IMR-90 (cell line): ENCODE measurements at regions of chrX and their contacts with region 1.

Region 1: GRCh38 chrX:108224727-108225621 is 133.4 kb downstream of the ATG4A start:
- DNase-seq: peak; percentile 31
- ATAC-seq: peak; percentile 63
- H3K4me3 ChIP-seq: no peak overlapping the region
- H3K27ac ChIP-seq: peak overlapping the region; percentile 20; the same call in 1 of the 2 replicates
- H3K4me1 ChIP-seq: peaks cover 2% of the 10 kb centered on the region; the same call in 1 of the 2 replicates
- H3K27me3 ChIP-seq: peaks cover 14% of the 10 kb centered on the region
- CTCF ChIP-seq: peak; percentile 59
- POLR2A ChIP-seq: no peak
- RAD21 ChIP-seq: peak; percentile 69

Region 2: DNA sequence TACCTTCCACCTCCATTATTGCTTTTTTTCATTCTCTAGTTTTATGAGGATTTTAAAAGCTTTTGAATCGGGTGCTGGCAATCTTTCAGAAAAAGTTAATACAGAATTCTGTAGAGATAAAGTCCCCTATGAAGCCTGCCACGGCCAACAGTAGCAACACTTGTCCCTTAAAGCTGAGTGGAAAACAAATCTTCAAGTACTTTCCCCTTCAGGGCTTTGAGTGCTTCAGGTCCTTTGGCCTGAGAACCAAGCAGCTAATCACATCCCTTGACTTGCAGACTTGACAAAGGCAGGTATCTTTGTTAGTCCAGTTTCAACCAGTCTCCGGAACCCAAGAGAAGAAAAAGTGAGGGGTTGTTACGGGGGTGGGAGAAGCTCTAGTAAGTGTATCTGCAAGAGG is 11.0 kb after region 1 on chrX:
- CTCF ChIA-PET with region 1: no interaction called
- POLR2A ChIA-PET with region 1: no interaction called
- dilution Hi-C with region 1: no loop called
- in situ Hi-C with region 1: no loop called
- intact Hi-C with region 1: no loop called
- DNase-seq: no peak
- ATAC-seq: no peak
- H3K4me3 ChIP-seq: no peak overlapping the region
- H3K27ac ChIP-seq: no peak overlapping the region
- H3K4me1 ChIP-seq: no peaks in the 10 kb centered on the region
- H3K27me3 ChIP-seq: peaks cover 12% of the 10 kb centered on the region
- CTCF ChIP-seq: no peak
- POLR2A ChIP-seq: no peak
- RAD21 ChIP-seq: no peak

Region 3: DNA sequence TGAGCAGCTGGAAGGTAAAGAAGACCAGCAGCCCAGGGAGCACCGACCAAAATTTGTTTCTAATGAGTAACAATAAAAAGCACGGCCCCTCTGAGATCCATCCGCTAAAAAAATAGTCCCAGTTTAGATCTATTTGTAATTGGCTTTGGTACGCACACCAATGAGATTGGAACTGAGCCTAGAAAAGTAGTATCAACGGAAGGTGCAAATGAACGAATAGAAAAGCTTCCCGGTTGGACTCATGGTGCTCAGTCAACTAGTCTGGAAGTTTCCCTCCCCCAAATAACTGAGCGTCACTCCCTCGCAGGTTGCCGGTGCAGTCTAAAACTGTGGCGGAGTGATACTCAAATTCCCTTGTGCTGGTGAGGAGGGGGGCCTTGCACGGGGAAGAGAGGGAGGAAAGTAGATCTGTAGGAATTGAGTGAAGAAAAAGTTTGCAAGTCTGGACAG is 214.5 kb after region 1 on chrX and contains the start of gene COL4A5:
- CTCF ChIA-PET with region 1: no interaction called
- POLR2A ChIA-PET with region 1: no interaction called
- dilution Hi-C with region 1: no loop called
- in situ Hi-C with region 1: no loop called
- intact Hi-C with region 1: loop called (anchors 2 kb)
- DNase-seq: peak; percentile 80
- ATAC-seq: peak; percentile 73
- H3K4me3 ChIP-seq: peak within 1 kb of the TSS; percentile 89
- H3K27ac ChIP-seq: peak within 1 kb of the TSS; percentile 83
- H3K4me1 ChIP-seq: no peaks in the 10 kb centered on the region
- H3K27me3 ChIP-seq: peaks cover 5% of the 10 kb centered on the region
- CTCF ChIP-seq: no peak
- POLR2A ChIP-seq: no peak
- RAD21 ChIP-seq: no peak
- total RNA-seq, gene COL4A5: 15.0 and 16.3 TPM in 2 replicates

Region 4: GRCh38 chrX:108537005-108537404 is 312.0 kb after region 1 on chrX:
- CTCF ChIA-PET with region 1: interaction called, 4 read pairs
- POLR2A ChIA-PET with region 1: no interaction called
- dilution Hi-C with region 1: no loop called
- in situ Hi-C with region 1: no loop called
- intact Hi-C with region 1: loop called (anchors 2 kb)
- DNase-seq: peak; percentile 38
- ATAC-seq: peak; percentile 83
- H3K4me3 ChIP-seq: no peak overlapping the region
- H3K27ac ChIP-seq: no peak overlapping the region
- H3K4me1 ChIP-seq: no peaks in the 10 kb centered on the region
- H3K27me3 ChIP-seq: no peaks in the 10 kb centered on the region
- CTCF ChIP-seq: peak; percentile 67
- POLR2A ChIP-seq: no peak
- RAD21 ChIP-seq: peak; percentile 72

Region 5: DNA sequence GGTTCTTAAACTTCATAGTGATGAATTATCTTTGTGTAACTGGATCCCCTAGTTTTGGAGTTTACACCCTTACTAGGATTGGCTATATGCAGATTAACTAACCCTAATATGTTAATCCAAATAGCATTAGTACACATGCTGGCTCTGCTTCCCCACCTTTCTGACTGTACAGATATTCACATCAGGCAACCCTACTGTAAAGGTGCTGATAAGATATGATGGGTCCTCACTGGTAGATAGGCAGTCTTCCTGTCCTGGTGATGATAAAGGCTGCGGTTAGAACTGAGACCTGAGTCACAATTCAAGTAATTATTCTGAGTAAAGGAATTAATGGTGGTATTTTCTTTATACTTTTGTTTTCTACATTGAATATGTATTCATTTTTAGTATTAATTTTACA is 333.2 kb after region 1 on chrX:
- CTCF ChIA-PET with region 1: no interaction called
- POLR2A ChIA-PET with region 1: no interaction called
- dilution Hi-C with region 1: no loop called
- in situ Hi-C with region 1: loop called (anchors 10 kb)
- intact Hi-C with region 1: no loop called
- DNase-seq: no peak
- ATAC-seq: no peak
- H3K4me3 ChIP-seq: no peak overlapping the region
- H3K27ac ChIP-seq: no peak overlapping the region
- H3K4me1 ChIP-seq: no peaks in the 10 kb centered on the region
- H3K27me3 ChIP-seq: peaks cover 2% of the 10 kb centered on the region; the same call in 1 of the 2 replicates
- CTCF ChIP-seq: no peak
- POLR2A ChIP-seq: no peak
- RAD21 ChIP-seq: no peak